ENCODE measurements at regions of chr17 and their contacts with region 1.

Region 1: GRCh38 chr17:45317112-45317928 is 500 bp upstream of the MAP3K14 start:
- DNase-seq: peak; percentile 99
- ATAC-seq: peak; percentile 87
- H3K4me3 Mint-ChIP-seq: peak overlapping the region; percentile 88
- H3K27ac Mint-ChIP-seq: peak overlapping the region; percentile 84
- H3K4me1 Mint-ChIP-seq: peaks cover 62% of the 10 kb centered on the region
- H3K27me3 Mint-ChIP-seq: no peaks in the 10 kb centered on the region

Region 2: GRCh38 chr17:45218895-45219661 is 98.2 kb before region 1 on chr17:
- POLR2A ChIA-PET with region 1: interaction called, 146 read pairs
- DNase-seq: peak; percentile 88
- ATAC-seq: no peak
- H3K4me3 Mint-ChIP-seq: peak overlapping the region; percentile 95
- H3K27ac Mint-ChIP-seq: peak overlapping the region; percentile 62
- H3K4me1 Mint-ChIP-seq: peaks cover 33% of the 10 kb centered on the region
- H3K27me3 Mint-ChIP-seq: no peaks in the 10 kb centered on the region

Region 3: GRCh38 chr17:45277216-45277849 is 40.0 kb before region 1 on chr17:
- POLR2A ChIA-PET with region 1: interaction called, 26 read pairs
- DNase-seq: peak; percentile 88
- ATAC-seq: peak; percentile 93
- H3K4me3 Mint-ChIP-seq: no peak overlapping the region
- H3K27ac Mint-ChIP-seq: no peak overlapping the region
- H3K4me1 Mint-ChIP-seq: peaks cover 18% of the 10 kb centered on the region
- H3K27me3 Mint-ChIP-seq: no peaks in the 10 kb centered on the region

Region 4: GRCh38 chr17:45282683-45283644 is 34.4 kb before region 1 on chr17:
- POLR2A ChIA-PET with region 1: interaction called, 10 read pairs
- DNase-seq: no peak
- ATAC-seq: peak; percentile 55
- H3K4me3 Mint-ChIP-seq: no peak overlapping the region
- H3K27ac Mint-ChIP-seq: peak overlapping the region; percentile 80
- H3K4me1 Mint-ChIP-seq: peaks cover 31% of the 10 kb centered on the region
- H3K27me3 Mint-ChIP-seq: no peaks in the 10 kb centered on the region

Region 5: GRCh38 chr17:45371414-45372327 is 54.4 kb after region 1 on chr17:
- POLR2A ChIA-PET with region 1: no interaction called
- DNase-seq: peak; percentile 56
- ATAC-seq: peak; percentile 62
- H3K4me3 Mint-ChIP-seq: peak overlapping the region; percentile 53
- H3K27ac Mint-ChIP-seq: no peak overlapping the region
- H3K4me1 Mint-ChIP-seq: peaks cover 12% of the 10 kb centered on the region
- H3K27me3 Mint-ChIP-seq: peaks cover 36% of the 10 kb centered on the region

Region 6: DNA sequence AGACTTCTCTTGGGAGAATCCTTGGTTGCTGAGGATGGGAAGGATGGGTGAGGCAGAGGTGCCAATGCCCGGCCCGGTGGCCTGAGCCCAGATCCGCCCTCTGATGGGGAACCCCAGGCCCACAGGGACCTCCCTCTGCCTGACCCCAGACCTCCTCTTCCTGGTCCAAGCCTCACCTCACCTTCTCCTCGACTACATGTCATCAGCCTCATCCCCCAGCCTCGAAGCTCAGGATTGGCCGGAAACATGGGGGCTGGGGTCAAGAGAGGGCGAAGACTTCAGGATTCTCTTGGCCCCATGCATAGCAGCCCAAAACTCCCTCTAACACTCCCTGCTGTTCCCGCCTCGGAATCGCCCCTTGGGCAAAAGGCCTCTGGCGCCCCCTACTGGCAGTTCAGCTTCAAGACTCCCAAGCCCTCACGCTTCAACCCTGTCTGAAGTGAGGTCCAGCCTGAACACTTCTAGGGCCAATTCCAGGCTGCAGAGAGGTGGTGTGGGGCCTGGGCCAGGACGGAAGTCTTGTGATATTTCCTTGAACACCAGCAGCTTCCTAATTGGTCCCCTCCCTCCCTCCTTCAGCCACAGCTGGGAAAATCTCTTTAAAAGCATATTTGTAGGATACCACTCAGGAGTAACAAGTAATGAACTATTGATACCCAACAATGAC is 68.1 kb after region 1 on chr17:
- POLR2A ChIA-PET with region 1: interaction called, 16 read pairs
- DNase-seq: peak; percentile 90
- ATAC-seq: peak; percentile 89
- H3K4me3 Mint-ChIP-seq: peak overlapping the region; percentile 12
- H3K27ac Mint-ChIP-seq: peak overlapping the region; percentile 72
- H3K4me1 Mint-ChIP-seq: peaks cover 34% of the 10 kb centered on the region
- H3K27me3 Mint-ChIP-seq: peaks cover 12% of the 10 kb centered on the region

Measured in activated naive CD8-positive, alpha-beta T cell treated with anti-CD3 and anti-CD28 coated beads, Interleukin-2, amount 10 ng/mL, durations not matched to agents 7 days and 5 days (primary cell).